ENCODE measurements at regions of chr11 and their contacts with region 1.

Region 1: DNA sequence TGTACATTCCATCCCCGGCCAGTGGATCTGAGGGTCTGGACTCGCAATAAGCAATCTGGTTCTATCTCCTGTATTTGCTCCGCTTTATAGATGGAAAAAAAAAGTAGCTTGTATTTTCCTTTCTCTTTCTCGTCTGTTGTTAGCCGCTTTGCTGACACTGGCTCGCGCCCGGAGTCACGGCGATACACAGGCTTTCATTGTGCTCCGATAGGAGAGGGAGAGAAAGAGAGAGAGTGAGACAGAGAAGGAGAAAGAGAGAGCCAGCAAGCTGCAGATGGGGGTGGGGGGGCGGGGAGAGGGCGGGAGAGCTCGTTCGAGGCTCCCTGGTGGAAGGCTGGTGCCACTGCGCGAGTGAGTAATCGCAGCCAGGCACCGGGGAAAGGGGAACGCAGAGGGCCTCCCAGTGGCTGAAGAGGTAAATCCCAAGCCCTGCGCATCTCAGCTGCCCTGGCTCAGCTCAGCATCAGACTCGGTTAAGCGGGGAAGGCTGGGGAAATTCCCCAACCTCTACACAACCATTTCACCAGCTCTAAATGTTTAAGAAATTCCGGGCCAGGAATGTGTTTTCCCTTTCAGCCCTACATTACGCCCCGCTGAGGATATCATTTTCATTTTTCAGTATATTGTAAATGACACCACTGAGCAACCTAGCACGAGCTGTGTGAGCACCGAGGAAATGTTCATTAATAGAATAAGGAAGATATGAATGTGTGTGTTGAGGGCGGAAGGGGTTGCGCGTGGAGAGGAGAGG is at the start of gene MAML2:
- DNase-seq: peak; percentile 98
- ATAC-seq: peak; percentile 87
- H3K4me3 ChIP-seq: peak within 1 kb of the TSS; percentile 89
- H3K27ac ChIP-seq: peak within 1 kb of the TSS; percentile 69
- H3K4me1 ChIP-seq: peaks cover 36% of the 10 kb centered on the region
- H3K27me3 ChIP-seq: no peaks in the 10 kb centered on the region
- CTCF ChIP-seq: peak; percentile 79
- total RNA-seq, gene MAML2: 10.3 and 10.9 TPM in 2 replicates

Region 2: GRCh38 chr11:95849087-95849825 is 493.9 kb before region 1 on chr11:
- CTCF ChIA-PET with region 1: interaction called, 24 read pairs
- POLR2A ChIA-PET with region 1: interaction called, 6 read pairs
- intact Hi-C with region 1: no loop called
- DNase-seq: peak; percentile 88
- ATAC-seq: peak; percentile 86
- H3K4me3 ChIP-seq: peak overlapping the region; percentile 26; the same call in 1 of the 2 replicates
- H3K27ac ChIP-seq: peak overlapping the region; percentile 77
- H3K4me1 ChIP-seq: peaks cover 30% of the 10 kb centered on the region
- H3K27me3 ChIP-seq: no peaks in the 10 kb centered on the region
- CTCF ChIP-seq: peak; percentile 92

Region 3: DNA sequence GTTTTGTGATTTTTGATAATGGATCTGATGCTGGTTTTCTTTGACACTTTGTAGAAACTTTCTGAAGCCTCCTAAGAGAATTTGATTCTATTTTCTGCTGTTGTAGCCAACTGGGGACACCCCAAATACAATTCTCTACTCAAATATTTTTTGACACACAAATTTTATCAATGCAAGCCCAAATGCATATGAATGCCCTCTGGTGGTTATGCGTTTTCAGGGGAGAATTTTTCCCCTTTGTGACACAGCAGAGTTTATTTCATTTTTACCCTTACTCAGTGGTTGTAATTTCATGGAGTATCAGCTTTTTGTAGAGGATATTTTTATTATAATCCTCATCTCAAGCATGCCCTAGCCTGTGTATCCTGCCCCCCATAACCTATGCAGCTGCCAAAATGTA is 374.6 kb before region 1 on chr11:
- CTCF ChIA-PET with region 1: no interaction called
- POLR2A ChIA-PET with region 1: no interaction called
- intact Hi-C with region 1: no loop called
- DNase-seq: peak; percentile 56
- ATAC-seq: no peak; the same call in 1 of the 2 replicates
- H3K4me3 ChIP-seq: no peak overlapping the region
- H3K27ac ChIP-seq: no peak overlapping the region
- H3K4me1 ChIP-seq: no peaks in the 10 kb centered on the region
- H3K27me3 ChIP-seq: no peaks in the 10 kb centered on the region
- CTCF ChIP-seq: peak; percentile 80

Region 4: GRCh38 chr11:96037405-96037936 is 305.7 kb before region 1 on chr11:
- CTCF ChIA-PET with region 1: interaction called, 11 read pairs
- POLR2A ChIA-PET with region 1: interaction called, 4 read pairs
- intact Hi-C with region 1: loop called (anchors 1 kb)
- DNase-seq: peak; percentile 95
- ATAC-seq: peak; percentile 69
- H3K4me3 ChIP-seq: peak overlapping the region; percentile 53
- H3K27ac ChIP-seq: peak overlapping the region; percentile 91
- H3K4me1 ChIP-seq: peaks cover 49% of the 10 kb centered on the region
- H3K27me3 ChIP-seq: no peaks in the 10 kb centered on the region
- CTCF ChIP-seq: peak; percentile 53

Region 5: GRCh38 chr11:96162816-96163499 is 180.2 kb before region 1 on chr11:
- CTCF ChIA-PET with region 1: interaction called, 10 read pairs
- POLR2A ChIA-PET with region 1: no interaction called
- intact Hi-C with region 1: loop called (anchors 5 kb)
- DNase-seq: peak; percentile 63
- ATAC-seq: peak; percentile 66
- H3K4me3 ChIP-seq: no peak overlapping the region
- H3K27ac ChIP-seq: peak overlapping the region; percentile 73
- H3K4me1 ChIP-seq: peaks cover 32% of the 10 kb centered on the region
- H3K27me3 ChIP-seq: no peaks in the 10 kb centered on the region
- CTCF ChIP-seq: no peak

Region 6: GRCh38 chr11:96228473-96228891 is 114.7 kb before region 1 on chr11:
- CTCF ChIA-PET with region 1: no interaction called
- POLR2A ChIA-PET with region 1: no interaction called
- intact Hi-C with region 1: loop called (anchors 5 kb)
- DNase-seq: peak; percentile 98
- ATAC-seq: peak; percentile 98
- H3K4me3 ChIP-seq: no peak overlapping the region
- H3K27ac ChIP-seq: peak overlapping the region; percentile 82
- H3K4me1 ChIP-seq: peaks cover 31% of the 10 kb centered on the region
- H3K27me3 ChIP-seq: no peaks in the 10 kb centered on the region
- CTCF ChIP-seq: no peak

Region 7: DNA sequence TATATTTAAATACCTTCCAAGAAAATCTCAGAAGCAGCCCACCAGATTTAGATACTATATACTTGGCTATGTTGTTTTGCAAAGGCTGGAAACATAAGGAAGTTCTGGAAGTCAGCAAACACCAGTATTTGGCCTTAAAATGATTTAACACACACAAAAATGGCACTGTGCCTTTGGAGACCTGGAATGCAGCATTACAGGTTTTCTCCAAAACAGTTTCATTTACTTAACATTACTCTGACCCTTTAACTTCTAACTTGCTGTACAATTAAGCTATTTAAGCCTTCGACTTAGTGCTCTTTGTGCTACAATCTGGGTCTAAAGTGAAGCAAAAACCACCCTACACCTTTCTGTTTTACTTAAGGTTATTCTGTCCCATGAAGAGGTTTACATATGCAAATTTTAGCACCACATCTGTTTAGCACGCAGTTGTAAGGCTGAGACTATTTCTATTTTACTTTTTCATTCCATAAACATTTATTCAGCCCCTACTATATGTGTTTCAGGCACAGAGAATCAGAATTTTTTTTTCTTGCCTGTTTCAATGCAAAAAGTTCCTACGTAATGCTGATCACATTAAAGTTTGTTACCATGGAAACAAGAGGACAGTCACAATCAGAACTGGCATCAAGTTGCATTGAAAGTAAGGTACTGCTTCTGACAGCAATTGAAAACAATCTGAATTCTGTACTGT is 70.5 kb before region 1 on chr11:
- CTCF ChIA-PET with region 1: interaction called, 6 read pairs
- POLR2A ChIA-PET with region 1: no interaction called
- intact Hi-C with region 1: loop called (anchors 2 kb)
- DNase-seq: peak; percentile 95
- ATAC-seq: peak; percentile 79
- H3K4me3 ChIP-seq: peak overlapping the region; percentile 43
- H3K27ac ChIP-seq: peak overlapping the region; percentile 84
- H3K4me1 ChIP-seq: peaks cover 25% of the 10 kb centered on the region
- H3K27me3 ChIP-seq: no peaks in the 10 kb centered on the region
- CTCF ChIP-seq: no peak

Measured in PC-3 (cell line).